ENCODE measurements at regions of chr1 and their contacts with region 1.

Region 1: GRCh38 chr1:57450981-57451380 is 27.1 kb upstream of the DAB1 start:
- DNase-seq: no peak
- H3K4me3 ChIP-seq: no peak overlapping the region
- CTCF ChIP-seq: no peak
- POLR2A ChIP-seq: no peak

Region 2: GRCh38 chr1:57254022-57254421 is 197.0 kb before region 1 on chr1:
- intact Hi-C with region 1: no loop called
- DNase-seq: no peak
- H3K4me3 ChIP-seq: no peak overlapping the region
- CTCF ChIP-seq: no peak
- POLR2A ChIP-seq: no peak

Region 3: GRCh38 chr1:57512386-57512785 is 61.4 kb after region 1 on chr1:
- intact Hi-C with region 1: no loop called
- DNase-seq: no peak
- H3K4me3 ChIP-seq: no peak overlapping the region
- CTCF ChIP-seq: no peak
- POLR2A ChIP-seq: no peak

Region 4: DNA sequence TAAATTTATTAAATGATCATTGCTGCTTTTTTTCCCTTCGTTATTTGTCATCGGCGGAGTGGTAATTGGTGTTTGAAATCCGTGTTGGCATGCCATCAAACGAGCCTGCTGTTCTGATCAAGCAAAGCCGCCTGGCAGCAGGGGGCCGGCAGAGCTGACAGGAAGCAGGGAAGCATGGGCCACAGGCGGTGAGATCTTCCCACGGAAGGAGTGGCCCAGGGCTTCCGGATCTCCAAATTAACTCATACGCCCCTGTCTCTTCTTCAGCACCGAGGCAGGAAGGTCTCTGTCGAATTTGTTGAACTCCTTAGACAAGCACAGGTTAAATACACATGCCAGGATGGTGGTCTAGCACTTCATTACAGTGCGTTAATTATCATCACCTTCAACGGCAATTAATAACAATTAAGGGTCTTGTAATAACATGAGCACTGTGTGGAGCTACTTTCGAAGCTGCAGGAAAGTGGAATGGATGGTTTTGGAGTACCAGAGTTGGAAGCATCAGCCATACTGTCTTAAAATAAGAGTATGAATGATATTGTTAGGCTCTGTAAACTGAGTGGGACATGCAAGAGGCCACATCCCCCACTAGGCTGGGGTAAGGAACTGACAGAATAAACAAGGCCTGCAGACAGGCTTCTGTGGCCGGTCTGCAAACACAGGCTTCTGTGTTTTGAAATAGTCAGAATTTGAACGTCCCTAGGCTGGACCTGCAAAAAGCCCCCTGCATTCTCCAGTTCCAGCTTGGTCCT is 172.2 kb after region 1 on chr1:
- intact Hi-C with region 1: no loop called
- DNase-seq: no peak
- H3K4me3 ChIP-seq: no peak overlapping the region
- CTCF ChIP-seq: no peak
- POLR2A ChIP-seq: no peak

Region 5: GRCh38 chr1:57788313-57788712 is 337.3 kb after region 1 on chr1:
- intact Hi-C with region 1: no loop called
- DNase-seq: no peak
- H3K4me3 ChIP-seq: no peak overlapping the region
- CTCF ChIP-seq: no peak
- POLR2A ChIP-seq: no peak

Region 6: DNA sequence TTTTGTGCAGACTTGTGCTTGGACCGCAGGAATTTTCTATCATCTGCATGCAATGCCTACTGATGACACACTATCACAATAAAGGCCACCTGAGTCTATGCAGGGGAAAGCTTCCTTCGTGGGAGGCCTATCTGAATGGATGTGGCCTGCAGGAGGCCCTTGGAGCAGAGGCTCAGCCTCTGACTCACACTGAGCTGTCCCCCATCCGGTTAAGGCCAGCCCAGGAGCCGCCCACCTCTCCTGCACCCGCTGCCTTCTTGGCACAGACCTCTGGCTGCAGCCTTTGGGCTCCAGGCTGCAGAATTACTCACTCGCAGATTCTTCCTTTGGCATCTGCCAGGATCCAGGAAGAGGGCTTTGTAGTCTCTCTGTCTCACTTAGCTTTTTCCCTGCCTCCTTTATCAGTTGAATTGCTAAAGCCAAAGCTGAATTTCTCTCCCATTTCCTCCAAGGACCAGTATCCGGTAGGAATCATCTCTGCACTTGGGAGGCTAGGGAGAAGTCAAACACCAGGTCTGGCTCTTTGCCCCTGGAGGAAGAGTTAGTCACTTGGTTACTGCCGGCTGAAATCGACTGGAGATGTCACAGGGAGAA is 1397.9 kb after region 1 on chr1:
- intact Hi-C with region 1: loop called (anchors 10 kb)
- DNase-seq: peak; percentile 47 to 89
- H3K4me3 ChIP-seq: no peak overlapping the region
- CTCF ChIP-seq: no peak
- POLR2A ChIP-seq: no peak